ENCODE measurements at regions of chr7 and their contacts with region 1.

Region 1: DNA sequence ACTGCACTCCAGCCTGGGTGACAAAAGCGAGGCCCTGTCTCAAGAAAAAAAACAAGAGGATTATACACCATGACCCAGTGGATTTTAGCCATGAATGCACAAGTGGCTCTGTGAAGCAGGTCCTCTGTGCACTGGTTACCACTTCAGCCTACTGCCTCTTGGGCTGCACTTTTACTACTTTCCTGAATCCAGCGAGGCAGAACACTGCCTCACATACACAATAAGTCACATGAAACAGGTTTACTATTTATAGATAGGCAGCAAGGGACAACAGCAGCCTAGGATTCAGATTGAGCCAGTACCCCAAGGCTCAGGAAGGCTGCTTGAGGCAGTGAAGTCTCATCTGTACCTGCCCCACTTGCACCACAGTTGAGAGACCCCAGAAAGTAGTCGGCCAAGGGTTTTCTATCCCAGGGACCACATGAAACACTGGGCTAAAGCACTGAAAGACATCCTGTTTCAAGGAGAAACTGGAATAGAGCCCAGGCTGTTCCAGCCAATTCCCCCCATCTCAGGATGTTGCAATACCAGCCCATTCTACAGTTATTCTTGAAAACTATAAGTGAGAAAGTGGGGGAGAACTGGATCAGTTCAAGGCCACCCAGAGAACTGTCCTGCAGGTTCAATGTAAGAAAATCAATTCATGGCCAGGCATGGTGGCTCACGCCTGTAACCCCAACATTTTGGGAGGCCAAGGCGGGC is 10.3 kb upstream of the OGDH start:
- DNase-seq: no peak

Region 2: GRCh38 chr7:44581879-44582603 is 14.0 kb before region 1 on chr7 and contains the start of gene TMED4:
- intact Hi-C with region 1: no loop called
- DNase-seq: peak; percentile 100
- total RNA-seq, gene TMED4: 73.8 TPM

Region 3: GRCh38 chr7:44748045-44748947 is 152.2 kb after region 1 on chr7 and contains the start of gene ZMIZ2:
- intact Hi-C with region 1: loop called (anchors 5 kb)
- DNase-seq: peak; percentile 99
- total RNA-seq, gene ZMIZ2: 62.4 TPM